K562 (cell line): ENCODE measurements at regions of chr10 and their contacts with region 1.

Region 1: GRCh38 chr10:3197348-3198003 is 24.9 kb upstream of the PITRM1 start:
- DNase-seq: peak; percentile 69 to 79 (median 74)
- ATAC-seq: peak; percentile 94
- H3K4me3 ChIP-seq: no peak overlapping the region
- H3K27ac ChIP-seq: no peak overlapping the region
- H3K4me1 ChIP-seq: peaks cover 0 to 8% of the 10 kb centered on the region in 2 experiments; a peak in 2 of 5 replicates
- H3K27me3 ChIP-seq: peaks cover 33 to 74% of the 10 kb centered on the region in 2 experiments
- CTCF ChIP-seq: peak; percentile 81 to 88 (median 86)
- EP300 ChIP-seq: peak; percentile 54; the same call in 1 of the 2 replicates
- POLR2A ChIP-seq: no peak
- RAD21 ChIP-seq: peak; percentile 85 to 90

Region 2: DNA sequence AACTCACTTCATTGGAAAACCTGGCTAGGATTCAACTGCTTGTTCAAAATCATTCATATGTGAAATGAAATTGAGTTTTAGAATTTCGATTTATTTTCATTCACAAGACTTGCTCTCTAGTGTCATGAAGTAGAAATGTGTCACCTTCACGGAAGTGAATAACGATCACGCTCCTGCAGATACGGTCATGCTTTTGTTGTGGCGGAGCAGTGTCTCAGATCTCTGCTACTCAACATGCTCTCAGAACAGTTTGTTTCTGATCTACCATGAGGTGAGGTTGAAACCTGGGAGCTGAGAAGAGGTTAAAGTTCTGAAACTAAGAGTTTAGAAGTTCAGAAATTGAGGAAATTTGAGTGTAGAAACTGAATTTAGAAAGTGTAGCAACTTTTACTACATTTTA is 11.1 kb before region 1 on chr10:
- CTCF ChIA-PET with region 1: no interaction called
- POLR2A ChIA-PET with region 1: no interaction called
- in situ Hi-C with region 1: no loop called
- intact Hi-C with region 1: no loop called
- DNase-seq: no peak
- ATAC-seq: no peak
- H3K4me3 ChIP-seq: no peak overlapping the region
- H3K27ac ChIP-seq: no peak overlapping the region
- H3K4me1 ChIP-seq: no peaks in the 10 kb centered on the region
- H3K27me3 ChIP-seq: peaks cover 25 to 41% of the 10 kb centered on the region in 2 experiments; a peak in 4 of 5 replicates
- CTCF ChIP-seq: no peak
- EP300 ChIP-seq: no peak
- POLR2A ChIP-seq: no peak
- RAD21 ChIP-seq: no peak

Region 3: GRCh38 chr10:3239066-3239919 is 41.8 kb after region 1 on chr10:
- CTCF ChIA-PET with region 1: no interaction called
- POLR2A ChIA-PET with region 1: no interaction called
- in situ Hi-C with region 1: no loop called
- intact Hi-C with region 1: loop called (anchors 5 kb)
- DNase-seq: peak; percentile 56 to 72 (median 60)
- ATAC-seq: peak; percentile 96
- H3K4me3 ChIP-seq: no peak overlapping the region
- H3K27ac ChIP-seq: no peak overlapping the region
- H3K4me1 ChIP-seq: peaks cover 0 to 8% of the 10 kb centered on the region in 2 experiments; a peak in 1 of 5 replicates
- H3K27me3 ChIP-seq: peaks cover 39 to 88% of the 10 kb centered on the region in 2 experiments
- CTCF ChIP-seq: peak; percentile 81 to 90 (median 86)
- EP300 ChIP-seq: no peak
- POLR2A ChIP-seq: no peak
- RAD21 ChIP-seq: peak; percentile 87 to 92

Region 4: GRCh38 chr10:3623746-3624145 is 426.3 kb after region 1 on chr10:
- CTCF ChIA-PET with region 1: no interaction called
- POLR2A ChIA-PET with region 1: no interaction called
- in situ Hi-C with region 1: no loop called
- intact Hi-C with region 1: no loop called
- DNase-seq: no peak
- ATAC-seq: no peak
- H3K4me3 ChIP-seq: no peak overlapping the region
- H3K27ac ChIP-seq: no peak overlapping the region
- H3K4me1 ChIP-seq: no peaks in the 10 kb centered on the region
- H3K27me3 ChIP-seq: no peaks in the 10 kb centered on the region
- CTCF ChIP-seq: no peak
- EP300 ChIP-seq: no peak
- POLR2A ChIP-seq: no peak
- RAD21 ChIP-seq: no peak